Right ventricle myocardium inferior (tissue), 1 donor: ENCODE measurements at regions of chr2 and their contacts with region 1.

Region 1: GRCh38 chr2:232444409-232445148 is 11.4 kb upstream of the ALPI start:
- DNase-seq: no peak
- ATAC-seq: no peak

Region 2: DNA sequence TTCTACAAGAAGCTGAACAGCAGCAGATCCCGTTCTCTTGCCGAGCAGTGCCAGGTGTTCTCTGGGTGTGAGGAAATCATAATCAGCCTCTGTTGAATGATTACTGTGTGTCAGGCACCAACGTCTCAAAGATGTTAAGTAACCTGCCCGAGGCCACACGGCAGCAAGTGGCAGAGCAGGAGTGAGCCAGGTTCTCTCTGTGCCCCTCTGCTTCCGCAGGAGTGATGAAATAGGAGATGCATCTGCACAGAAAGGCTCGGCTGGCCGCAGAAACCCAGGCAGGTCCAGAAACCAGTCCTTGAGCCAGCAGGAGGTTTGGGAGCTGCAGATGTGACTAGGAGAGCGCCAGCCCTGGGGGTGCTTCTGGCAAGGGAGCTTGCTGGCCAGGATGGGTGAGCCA is 589.9 kb before region 1 on chr2:
- intact Hi-C with region 1: loop called (anchors 5 kb)
- DNase-seq: no peak
- ATAC-seq: no peak

Region 3: GRCh38 chr2:232521959-232522622 is 77.5 kb after region 1 on chr2:
- intact Hi-C with region 1: loop called (anchors 5 kb)
- DNase-seq: peak; percentile 87
- ATAC-seq: peak; percentile 39